ENCODE measurements at regions of chr19 and their contacts with region 1.

Region 1: GRCh38 chr19:11987405-11988281 is 22.8 kb downstream of the ZNF763 start:
- DNase-seq: peak; percentile 91
- ATAC-seq: peak; percentile 99
- H3K4me3 ChIP-seq: peak overlapping the region; percentile 93
- H3K27ac ChIP-seq: peak overlapping the region; percentile 93
- H3K4me1 ChIP-seq: peaks cover 2% of the 10 kb centered on the region; the same call in 1 of the 2 replicates
- H3K27me3 ChIP-seq: no peaks in the 10 kb centered on the region
- CTCF ChIP-seq: no peak
- POLR2A ChIP-seq: peak; percentile 90
- RAD21 ChIP-seq: no peak

Region 2: DNA sequence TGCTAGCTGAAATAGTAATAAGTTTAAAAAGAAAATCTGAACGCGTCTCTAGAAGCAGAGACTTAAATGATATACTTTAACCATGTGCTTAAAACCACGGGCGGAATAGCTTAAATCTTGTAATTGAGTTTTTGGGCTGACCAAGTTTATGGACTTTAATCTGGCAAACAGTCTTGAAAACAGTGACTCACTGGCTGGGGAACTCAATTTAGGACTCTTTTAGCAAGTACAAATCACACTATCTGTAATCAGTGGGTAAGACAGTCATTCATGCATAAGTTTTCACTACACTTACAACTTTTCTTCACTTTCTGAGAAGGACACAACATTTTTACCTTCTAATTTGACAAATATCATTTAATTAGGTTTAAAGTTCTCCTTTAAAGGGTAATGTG is 363.6 kb before region 1 on chr19:
- CTCF ChIA-PET with region 1: no interaction called
- POLR2A ChIA-PET with region 1: no interaction called
- dilution Hi-C with region 1: no loop called
- in situ Hi-C with region 1: no loop called
- intact Hi-C with region 1: no loop called
- DNase-seq: peak; percentile 35
- ATAC-seq: peak; percentile 38
- H3K4me3 ChIP-seq: no peak overlapping the region
- H3K27ac ChIP-seq: no peak overlapping the region
- H3K4me1 ChIP-seq: no peaks in the 10 kb centered on the region; the same call in 1 of the 2 replicates
- H3K27me3 ChIP-seq: peaks cover 6% of the 10 kb centered on the region
- CTCF ChIP-seq: no peak
- POLR2A ChIP-seq: no peak
- RAD21 ChIP-seq: no peak

Region 3: GRCh38 chr19:11798391-11799330 is 189.0 kb before region 1 on chr19 and contains the start of gene ZNF491:
- CTCF ChIA-PET with region 1: no interaction called
- POLR2A ChIA-PET with region 1: no interaction called
- dilution Hi-C with region 1: no loop called
- in situ Hi-C with region 1: no loop called
- intact Hi-C with region 1: loop called (anchors 1 kb)
- DNase-seq: peak; percentile 87
- ATAC-seq: peak; percentile 99
- H3K4me3 ChIP-seq: peak within 1 kb of the TSS; percentile 76
- H3K27ac ChIP-seq: peak within 1 kb of the TSS; percentile 58
- H3K4me1 ChIP-seq: 0 out of 2 replicates have a peak, but pooled peaks cover 4% of the 10 kb centered on the region
- H3K27me3 ChIP-seq: no peaks in the 10 kb centered on the region
- CTCF ChIP-seq: peak; percentile 31
- POLR2A ChIP-seq: peak; percentile 52; the same call in 1 of the 2 replicates
- RAD21 ChIP-seq: no peak
- total RNA-seq, gene ZNF491: 3.6 and 4.2 TPM in 2 replicates

Region 4: DNA sequence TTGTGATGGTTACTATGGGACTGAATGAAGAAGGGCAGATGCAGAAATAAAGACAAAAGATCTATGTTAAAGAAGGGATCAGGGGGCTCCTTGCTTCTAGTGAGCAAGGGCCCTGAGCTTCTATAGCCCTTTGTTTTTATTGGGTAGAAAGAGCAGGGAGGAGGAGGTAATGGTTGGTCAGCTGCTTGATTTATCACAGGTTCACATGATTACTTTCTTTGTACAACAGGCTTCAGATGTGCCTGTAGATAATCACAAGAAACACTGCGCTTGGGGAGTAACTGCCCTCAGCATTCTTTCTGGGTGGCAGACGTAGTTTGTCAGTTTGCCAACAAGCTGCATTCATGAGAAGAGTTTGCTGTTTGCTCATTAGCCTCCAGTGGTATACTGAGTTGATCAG is 143.9 kb before region 1 on chr19:
- CTCF ChIA-PET with region 1: no interaction called
- POLR2A ChIA-PET with region 1: no interaction called
- dilution Hi-C with region 1: no loop called
- in situ Hi-C with region 1: no loop called
- intact Hi-C with region 1: no loop called
- DNase-seq: no peak
- ATAC-seq: no peak
- H3K4me3 ChIP-seq: no peak overlapping the region
- H3K27ac ChIP-seq: no peak overlapping the region
- H3K4me1 ChIP-seq: no peaks in the 10 kb centered on the region
- H3K27me3 ChIP-seq: no peaks in the 10 kb centered on the region
- CTCF ChIP-seq: no peak
- POLR2A ChIP-seq: no peak
- RAD21 ChIP-seq: no peak

Region 5: GRCh38 chr19:11924886-11925650 is 62.6 kb before region 1 on chr19 and contains the start of gene ZNF700:
- CTCF ChIA-PET with region 1: interaction called, 24 read pairs
- POLR2A ChIA-PET with region 1: interaction called, 4 read pairs
- dilution Hi-C with region 1: no loop called
- in situ Hi-C with region 1: no loop called
- intact Hi-C with region 1: loop called (anchors 1 kb)
- DNase-seq: peak; percentile 86
- ATAC-seq: peak; percentile 96
- H3K4me3 ChIP-seq: peak within 1 kb of the TSS; percentile 93
- H3K27ac ChIP-seq: peak within 1 kb of the TSS; percentile 97
- H3K4me1 ChIP-seq: peaks cover 4% of the 10 kb centered on the region; the same call in 1 of the 2 replicates
- H3K27me3 ChIP-seq: no peaks in the 10 kb centered on the region
- CTCF ChIP-seq: no peak
- POLR2A ChIP-seq: peak; percentile 72; the same call in 1 of the 2 replicates
- RAD21 ChIP-seq: no peak
- total RNA-seq, gene ZNF700: 10.2 and 11.9 TPM in 2 replicates

Region 6: DNA sequence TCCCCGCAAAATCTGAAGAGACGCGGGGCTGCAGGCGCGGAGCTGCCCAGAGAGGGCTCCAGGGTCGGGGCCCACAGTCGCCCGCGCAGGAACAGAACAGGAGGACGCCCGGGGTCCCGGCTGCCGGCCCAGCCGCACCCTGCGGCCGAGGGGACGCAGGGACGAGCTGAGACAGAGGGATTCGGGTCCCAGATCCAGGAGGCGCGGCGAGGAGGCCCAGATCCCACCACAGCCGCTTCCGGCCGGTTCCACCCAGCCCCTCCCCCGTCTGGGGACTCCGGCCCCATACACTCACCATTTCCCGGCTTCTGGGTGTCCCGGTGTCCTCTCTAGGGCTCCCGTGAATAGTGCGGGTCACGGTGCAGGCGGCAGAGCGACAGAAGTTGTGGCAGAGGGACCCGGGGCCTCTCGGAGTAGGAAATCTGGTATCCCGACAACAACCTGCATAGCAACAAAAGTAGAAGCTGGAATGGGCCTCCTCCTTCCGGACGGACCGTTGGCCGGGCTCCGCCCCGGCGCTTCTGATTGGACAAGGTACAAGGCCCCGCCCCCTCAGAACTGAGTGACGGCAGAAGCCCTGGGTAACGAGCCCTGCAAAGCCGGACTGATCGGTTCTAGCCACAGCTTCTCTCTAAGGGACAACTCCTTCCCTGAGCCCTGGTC is 152.4 kb after region 1 on chr19 and contains the start of gene ZNF20:
- CTCF ChIA-PET with region 1: no interaction called
- POLR2A ChIA-PET with region 1: no interaction called
- dilution Hi-C with region 1: no loop called
- in situ Hi-C with region 1: no loop called
- intact Hi-C with region 1: loop called (anchors 2 kb)
- DNase-seq: peak; percentile 91
- ATAC-seq: peak; percentile 98
- H3K4me3 ChIP-seq: peak within 1 kb of the TSS; percentile 96
- H3K27ac ChIP-seq: peak within 1 kb of the TSS; percentile 82
- H3K4me1 ChIP-seq: peaks cover 3% of the 10 kb centered on the region; the same call in 1 of the 2 replicates
- H3K27me3 ChIP-seq: no peaks in the 10 kb centered on the region
- CTCF ChIP-seq: no peak
- POLR2A ChIP-seq: peak; percentile 66
- RAD21 ChIP-seq: no peak
- total RNA-seq, gene ZNF20: 7.8 and 7.9 TPM in 2 replicates

Region 7: DNA sequence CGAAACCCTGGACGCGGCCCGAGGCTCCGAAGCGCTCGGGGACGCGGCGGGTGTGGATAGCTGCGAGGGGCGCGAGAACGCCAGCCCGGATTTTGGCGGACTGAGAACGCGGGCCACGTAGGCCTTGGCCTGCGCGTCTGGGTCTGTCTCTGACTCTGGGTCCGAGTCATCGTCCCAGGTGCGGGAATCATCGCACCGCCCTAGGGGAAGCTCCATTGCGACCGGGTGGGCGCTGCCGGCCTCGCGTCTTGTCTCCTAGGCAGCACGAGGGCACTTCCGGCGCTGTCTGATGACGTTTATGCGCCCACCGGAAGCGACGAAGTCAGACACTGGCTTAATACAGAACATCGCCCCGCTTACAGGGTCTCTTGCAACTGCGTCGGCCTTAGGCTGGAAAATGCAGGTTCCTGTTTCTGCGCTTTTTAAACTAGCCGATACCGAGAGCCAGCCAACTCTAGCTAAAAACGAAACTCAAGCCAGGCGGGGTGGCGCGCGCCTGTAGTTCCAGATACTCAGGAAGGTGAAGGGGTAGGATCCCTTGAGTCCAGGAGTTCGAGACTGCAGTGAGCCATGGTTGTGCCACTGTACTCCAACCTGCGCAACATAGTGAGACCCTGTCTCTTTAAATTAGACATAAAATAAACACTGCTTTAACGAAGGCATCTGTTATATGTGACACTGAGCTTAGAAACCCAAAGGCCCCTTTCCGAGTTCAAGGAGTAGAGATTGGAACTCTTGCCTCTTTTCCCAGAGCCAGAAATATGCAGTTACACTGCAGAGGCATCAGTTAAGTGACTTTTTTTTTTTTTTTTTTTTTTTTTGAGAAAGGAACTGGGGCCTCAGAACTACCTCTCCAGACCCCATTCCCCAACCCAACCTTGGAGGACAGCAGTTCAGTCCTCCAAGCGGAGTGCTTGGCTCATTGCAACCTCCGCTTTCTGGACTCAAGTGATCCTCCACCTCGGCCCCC is 709.0 kb after region 1 on chr19 and contains the start of gene FBXW9:
- CTCF ChIA-PET with region 1: no interaction called
- POLR2A ChIA-PET with region 1: interaction called, 12 read pairs
- dilution Hi-C with region 1: no loop called
- in situ Hi-C with region 1: no loop called
- intact Hi-C with region 1: no loop called
- DNase-seq: peak; percentile 95
- ATAC-seq: peak; percentile 86
- H3K4me3 ChIP-seq: peak within 1 kb of the TSS; percentile 80
- H3K27ac ChIP-seq: peak within 1 kb of the TSS; percentile 63
- H3K4me1 ChIP-seq: peaks cover 2% of the 10 kb centered on the region; the same call in 1 of the 2 replicates
- H3K27me3 ChIP-seq: no peaks in the 10 kb centered on the region
- CTCF ChIP-seq: no peak
- POLR2A ChIP-seq: peak; percentile 43; the same call in 1 of the 2 replicates
- RAD21 ChIP-seq: no peak
- total RNA-seq, gene FBXW9: 8.6 and 9.5 TPM in 2 replicates

Measured in IMR-90 (cell line).